ENCODE measurements at regions of chr1 and their contacts with region 1.

Region 1: GRCh38 chr1:16999863-17000262 is 11.9 kb downstream of the ATP13A2 start:
- DNase-seq: no peak
- H3K4me3 ChIP-seq: no peak overlapping the region
- H3K27ac ChIP-seq: no peak overlapping the region
- H3K4me1 ChIP-seq: no peaks in the 10 kb centered on the region
- H3K27me3 ChIP-seq: no peaks in the 10 kb centered on the region
- CTCF ChIP-seq: no peak
- EP300 ChIP-seq: no peak
- POLR2A ChIP-seq: no peak

Region 2: DNA sequence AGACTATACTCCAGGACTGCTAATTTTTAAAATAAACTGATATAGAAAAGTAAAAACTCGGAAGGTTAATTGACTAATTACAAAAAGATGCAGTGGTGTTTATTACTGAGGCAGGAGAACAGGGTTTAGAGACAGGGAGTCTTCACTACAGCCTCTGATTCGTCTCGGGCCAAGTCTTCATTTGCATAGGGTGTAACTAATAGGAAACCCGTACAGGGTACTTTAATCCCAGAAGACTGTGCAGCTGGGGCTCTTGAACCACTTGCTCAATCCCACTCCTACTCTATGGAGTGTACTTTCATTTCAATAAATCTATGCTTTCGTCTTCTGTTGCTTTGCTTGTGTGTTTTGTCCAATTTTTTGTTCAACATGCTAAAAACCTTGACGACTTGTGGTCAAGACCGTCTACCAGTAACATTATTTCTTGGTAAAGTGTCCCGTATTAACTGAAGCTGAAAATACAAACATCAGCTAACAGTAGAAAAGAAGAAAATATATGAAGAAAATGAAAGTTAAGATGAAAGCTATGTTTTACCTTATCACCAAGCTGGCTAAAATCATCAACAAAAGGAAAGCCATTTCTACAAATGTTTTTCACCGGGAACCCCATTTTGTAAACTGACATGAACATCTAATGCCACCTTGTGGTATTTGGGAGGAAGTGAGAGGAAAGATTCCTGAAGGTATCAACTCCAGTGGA is 45.9 kb after region 1 on chr1:
- intact Hi-C with region 1: loop called in 1 of 4 experiments (anchors 10 kb)
- DNase-seq: no peak
- H3K4me3 ChIP-seq: peak overlapping the region; percentile 5
- H3K27ac ChIP-seq: no peak overlapping the region
- H3K4me1 ChIP-seq: peaks cover 3% of the 10 kb centered on the region
- H3K27me3 ChIP-seq: no peaks in the 10 kb centered on the region
- CTCF ChIP-seq: peak; percentile 37 to 88 (median 86)
- EP300 ChIP-seq: no peak
- POLR2A ChIP-seq: no peak

Region 3: GRCh38 chr1:17098446-17099251 is 98.8 kb after region 1 on chr1:
- intact Hi-C with region 1: no loop called
- DNase-seq: peak in 2 of 5 donors; percentile 50 to 58
- H3K4me3 ChIP-seq: no peak overlapping the region
- H3K27ac ChIP-seq: no peak overlapping the region
- H3K4me1 ChIP-seq: peaks cover 2% of the 10 kb centered on the region
- H3K27me3 ChIP-seq: no peaks in the 10 kb centered on the region
- CTCF ChIP-seq: no peak
- EP300 ChIP-seq: no peak
- POLR2A ChIP-seq: no peak

Measured in ovary (tissue), 10 donors.